Activated CD4-positive, alpha-beta T cell treated with anti-CD3 and anti-CD28 coated beads for 36 hours (primary cell): ENCODE measurements at regions of chr1 and their contacts with region 1.

Region 1: DNA sequence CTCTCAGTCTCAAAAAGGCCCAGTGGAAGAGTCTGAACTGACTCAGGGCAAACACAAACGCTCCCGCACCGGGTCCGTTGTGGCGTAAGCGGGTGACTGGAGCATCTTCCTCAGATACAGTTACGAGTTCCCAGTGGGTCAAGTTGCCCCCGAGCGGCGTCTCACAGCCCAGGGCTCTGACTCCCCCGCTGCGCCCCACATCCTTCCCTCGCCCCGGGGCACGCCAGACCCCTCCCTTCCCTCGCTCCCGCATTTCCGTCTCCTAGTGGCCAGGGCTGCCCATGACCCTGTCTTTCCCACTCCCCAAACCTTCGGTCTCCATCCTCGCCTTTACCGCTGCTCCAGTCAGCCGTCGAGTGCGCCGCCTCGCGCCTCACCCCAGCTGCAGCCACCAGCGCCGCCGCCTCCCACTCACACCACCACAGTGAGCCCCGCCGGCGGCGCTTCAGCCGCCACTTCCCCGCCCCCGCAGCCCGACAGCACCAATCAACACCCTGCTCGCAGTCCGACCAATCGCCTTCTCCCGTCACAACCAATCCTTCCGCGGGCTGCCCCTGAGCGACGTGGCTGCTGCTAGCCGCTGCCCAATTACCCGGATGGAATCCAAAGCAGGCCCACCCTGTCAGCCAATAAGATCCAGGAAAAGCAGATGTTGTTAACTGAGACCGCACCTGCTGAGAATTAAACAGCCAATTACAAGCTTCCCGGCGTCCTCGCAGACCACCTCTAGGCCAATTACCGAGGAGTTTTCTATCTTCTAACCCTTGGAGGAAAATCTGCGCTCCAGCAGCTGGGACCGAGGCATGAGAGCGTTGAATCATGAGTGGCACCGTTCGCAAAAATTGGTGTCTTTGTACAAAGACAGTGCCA is at the start of gene TDRKH:
- DNase-seq: peak; percentile 100
- ATAC-seq: peak; percentile 98
- H3K4me3 Mint-ChIP-seq: peak within 1 kb of the TSS; percentile 95
- H3K27ac Mint-ChIP-seq: peak within 1 kb of the TSS; percentile 89
- H3K4me1 Mint-ChIP-seq: peaks cover 18% of the 10 kb centered on the region
- H3K27me3 Mint-ChIP-seq: no peaks in the 10 kb centered on the region
- total RNA-seq, gene TDRKH: 18.4 to 19.9 TPM

Region 2: GRCh38 chr1:151085953-151086559 is 704.2 kb before region 1 on chr1:
- CTCF ChIA-PET with region 1: no interaction called
- POLR2A ChIA-PET with region 1: no interaction called
- intact Hi-C with region 1: no loop called
- DNase-seq: no peak
- ATAC-seq: no peak
- H3K4me3 Mint-ChIP-seq: no peak overlapping the region
- H3K27ac Mint-ChIP-seq: no peak overlapping the region
- H3K4me1 Mint-ChIP-seq: no peaks in the 10 kb centered on the region
- H3K27me3 Mint-ChIP-seq: no peaks in the 10 kb centered on the region

Region 3: DNA sequence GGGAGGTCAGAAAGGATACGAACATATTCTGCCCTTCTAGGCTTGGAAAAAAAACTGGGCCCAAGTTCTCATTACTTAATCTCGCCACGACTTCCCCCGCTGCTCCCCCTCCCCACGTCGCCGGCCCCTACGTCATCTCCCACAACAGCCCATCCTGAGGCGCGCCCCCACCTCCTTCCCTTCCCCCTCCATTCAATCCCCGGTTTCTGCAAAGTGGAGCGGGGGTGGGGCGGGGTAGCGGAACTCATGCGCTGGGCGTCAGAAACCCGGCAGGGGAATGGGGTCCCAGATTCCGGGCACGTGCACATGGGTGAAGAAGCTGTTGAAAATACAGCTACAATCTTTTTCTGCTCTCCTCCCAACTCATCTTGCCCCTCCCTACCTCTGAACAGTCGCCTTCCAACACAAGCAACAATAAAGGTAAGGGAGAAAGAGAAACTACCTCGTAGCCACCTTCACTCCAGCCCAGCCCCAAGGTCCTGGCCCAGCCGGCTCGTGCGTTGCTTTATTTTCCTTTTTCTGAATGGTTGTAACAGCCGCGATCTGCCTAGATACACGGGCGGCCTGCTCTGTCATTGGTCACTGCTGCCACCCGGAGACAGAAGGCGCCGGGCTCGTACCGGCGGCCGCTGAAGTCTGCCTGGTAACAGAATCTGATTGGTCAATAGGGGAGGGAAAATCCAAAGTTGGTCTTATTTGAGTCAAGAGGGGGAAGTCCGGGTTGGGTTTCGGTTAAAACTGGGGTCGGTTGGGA is 443.4 kb before region 1 on chr1 and contains the start of gene RFX5:
- CTCF ChIA-PET with region 1: no interaction called
- POLR2A ChIA-PET with region 1: no interaction called
- intact Hi-C with region 1: loop called in 1 of 2 experiments (anchors 1 kb)
- DNase-seq: peak; percentile 96
- ATAC-seq: peak; percentile 98
- H3K4me3 Mint-ChIP-seq: peak within 1 kb of the TSS; percentile 96
- H3K27ac Mint-ChIP-seq: peak within 1 kb of the TSS; percentile 94
- H3K4me1 Mint-ChIP-seq: peaks cover 31% of the 10 kb centered on the region
- H3K27me3 Mint-ChIP-seq: no peaks in the 10 kb centered on the region
- total RNA-seq, gene RFX5: 47.6 to 50.4 TPM

Region 4: DNA sequence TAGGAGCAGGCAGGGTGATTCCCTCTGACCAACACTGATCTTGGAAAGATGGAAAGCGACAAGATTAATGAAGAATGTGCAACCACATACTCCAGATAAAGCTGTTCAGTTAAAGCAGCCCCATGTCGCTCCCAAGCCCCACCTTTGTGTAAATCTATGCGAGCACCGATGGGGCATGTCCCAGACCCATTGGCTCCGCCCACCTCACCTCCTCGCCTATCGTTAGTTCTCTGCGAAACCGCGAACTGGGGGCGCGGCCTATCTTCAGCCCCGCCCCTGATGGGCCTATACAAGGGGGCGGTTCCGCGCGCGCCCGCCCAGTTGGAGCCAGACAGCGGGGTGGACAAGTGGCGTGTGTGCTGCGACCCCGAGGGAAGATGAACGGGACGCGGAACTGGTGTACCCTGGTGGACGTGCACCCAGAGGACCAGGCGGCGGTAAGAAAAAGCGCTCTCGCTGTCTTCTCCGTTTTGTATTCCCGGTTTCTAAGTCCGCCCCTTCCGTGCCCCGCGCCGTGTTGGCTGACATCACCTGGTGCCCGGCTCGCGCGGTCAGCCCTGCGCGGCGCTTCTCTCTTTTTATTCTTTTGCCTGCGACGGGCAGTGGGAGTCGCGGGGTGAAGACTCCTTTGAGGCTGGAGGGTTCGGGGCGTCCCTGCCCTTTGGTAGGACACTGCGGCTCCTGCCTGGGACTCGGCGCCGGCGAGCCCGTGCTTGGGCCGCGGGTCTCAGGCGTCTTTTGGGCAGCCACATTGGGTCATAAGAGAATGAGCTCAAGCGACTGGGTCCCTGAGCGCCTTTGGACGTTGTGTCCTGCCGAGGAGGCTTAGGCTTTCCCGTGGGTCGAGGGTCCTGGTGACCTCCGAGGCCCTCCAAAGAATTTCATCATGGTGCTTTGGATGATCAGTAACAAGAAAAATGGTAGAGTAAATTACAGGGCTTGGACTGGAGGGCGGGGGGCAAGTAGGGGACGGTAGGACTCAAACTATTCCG is 250.0 kb before region 1 on chr1 and contains the start of gene TUFT1:
- CTCF ChIA-PET with region 1: no interaction called
- POLR2A ChIA-PET with region 1: no interaction called
- intact Hi-C with region 1: loop called in 1 of 2 experiments (anchors 1 kb)
- DNase-seq: peak; percentile 97
- ATAC-seq: peak; percentile 99
- H3K4me3 Mint-ChIP-seq: peak within 1 kb of the TSS; percentile 90
- H3K27ac Mint-ChIP-seq: peak within 1 kb of the TSS; percentile 69
- H3K4me1 Mint-ChIP-seq: peaks cover 21% of the 10 kb centered on the region
- H3K27me3 Mint-ChIP-seq: peaks cover 7% of the 10 kb centered on the region
- total RNA-seq, gene TUFT1: 3.2 TPM

Region 5: GRCh38 chr1:151611832-151612500 is 178.3 kb before region 1 on chr1 and contains the start of gene SNX27:
- CTCF ChIA-PET with region 1: no interaction called
- POLR2A ChIA-PET with region 1: no interaction called
- intact Hi-C with region 1: loop called in 1 of 2 experiments (anchors 1 kb)
- DNase-seq: peak; percentile 95
- ATAC-seq: peak; percentile 93
- H3K4me3 Mint-ChIP-seq: peak within 1 kb of the TSS; percentile 99
- H3K27ac Mint-ChIP-seq: peak within 1 kb of the TSS; percentile 95
- H3K4me1 Mint-ChIP-seq: peaks cover 46% of the 10 kb centered on the region
- H3K27me3 Mint-ChIP-seq: peaks cover 6% of the 10 kb centered on the region
- total RNA-seq, gene SNX27: 28.5 to 29.1 TPM

Region 6: GRCh38 chr1:151803164-151803563 is 12.9 kb after region 1 on chr1:
- CTCF ChIA-PET with region 1: interaction called, 10 read pairs
- POLR2A ChIA-PET with region 1: no interaction called
- intact Hi-C with region 1: no loop called
- DNase-seq: no peak
- ATAC-seq: no peak
- H3K4me3 Mint-ChIP-seq: no peak overlapping the region
- H3K27ac Mint-ChIP-seq: no peak overlapping the region
- H3K4me1 Mint-ChIP-seq: peaks cover 3% of the 10 kb centered on the region
- H3K27me3 Mint-ChIP-seq: no peaks in the 10 kb centered on the region

Region 7: DNA sequence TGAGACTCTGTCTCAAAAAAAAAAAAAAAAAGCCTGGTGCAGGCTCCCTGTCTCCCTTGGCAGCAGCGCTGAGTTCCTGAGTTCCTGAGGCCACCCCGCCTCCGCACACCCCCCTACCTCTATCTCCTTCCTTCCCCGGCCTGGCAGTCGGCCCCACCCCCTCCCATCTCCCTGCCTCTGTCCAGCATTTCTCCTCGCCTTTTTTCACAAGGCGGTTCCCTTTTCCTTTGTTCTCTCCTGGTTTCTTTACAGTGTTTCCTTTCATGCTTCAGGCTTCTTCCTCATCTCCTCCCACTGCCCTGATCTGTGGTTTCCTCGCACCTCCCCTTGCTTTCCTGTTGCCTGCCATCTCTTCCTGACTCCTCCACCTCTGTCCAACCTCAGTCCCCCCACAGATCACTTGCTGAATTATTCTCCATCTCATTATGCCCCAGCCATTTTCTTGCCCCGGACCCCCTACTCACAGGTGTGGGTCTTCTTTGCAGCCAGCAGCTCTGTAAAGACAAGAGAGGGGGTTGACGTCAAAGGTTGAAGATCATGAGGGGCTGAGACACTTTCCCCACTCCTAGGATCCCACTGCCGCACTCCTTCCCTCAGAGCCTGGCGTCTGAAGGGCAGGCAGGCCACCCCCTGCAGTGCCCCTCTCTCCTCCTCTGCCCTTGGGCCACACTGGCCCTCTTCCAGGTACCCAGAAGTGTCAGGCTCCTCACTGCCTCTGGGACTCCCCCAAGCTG is 38.8 kb after region 1 on chr1:
- CTCF ChIA-PET with region 1: interaction called, 10 read pairs
- POLR2A ChIA-PET with region 1: interaction called, 9 read pairs
- intact Hi-C with region 1: loop called (anchors 2 kb)
- DNase-seq: no peak
- ATAC-seq: no peak
- H3K4me3 Mint-ChIP-seq: peak overlapping the region; percentile 11
- H3K27ac Mint-ChIP-seq: peak overlapping the region; percentile 69
- H3K4me1 Mint-ChIP-seq: peaks cover 79% of the 10 kb centered on the region
- H3K27me3 Mint-ChIP-seq: no peaks in the 10 kb centered on the region

Region 8: GRCh38 chr1:151860504-151861208 is 70.3 kb after region 1 on chr1:
- CTCF ChIA-PET with region 1: no interaction called
- POLR2A ChIA-PET with region 1: no interaction called
- intact Hi-C with region 1: no loop called
- DNase-seq: no peak
- ATAC-seq: no peak
- H3K4me3 Mint-ChIP-seq: no peak overlapping the region
- H3K27ac Mint-ChIP-seq: no peak overlapping the region
- H3K4me1 Mint-ChIP-seq: no peaks in the 10 kb centered on the region
- H3K27me3 Mint-ChIP-seq: no peaks in the 10 kb centered on the region

Region 9: GRCh38 chr1:152707860-152708259 is 917.6 kb after region 1 on chr1 and contains the start of gene LCE4A:
- CTCF ChIA-PET with region 1: no interaction called
- POLR2A ChIA-PET with region 1: no interaction called
- intact Hi-C with region 1: no loop called
- DNase-seq: no peak
- ATAC-seq: no peak
- H3K4me3 Mint-ChIP-seq: no peak within 1 kb of the TSS
- H3K27ac Mint-ChIP-seq: no peak within 1 kb of the TSS
- H3K4me1 Mint-ChIP-seq: no peaks in the 10 kb centered on the region
- H3K27me3 Mint-ChIP-seq: peaks cover 34% of the 10 kb centered on the region
- total RNA-seq, gene LCE4A: not detected